CD4-positive, alpha-beta T cell (primary cell): ENCODE measurements at regions of chr12 and their contacts with region 1.

Region 1: DNA sequence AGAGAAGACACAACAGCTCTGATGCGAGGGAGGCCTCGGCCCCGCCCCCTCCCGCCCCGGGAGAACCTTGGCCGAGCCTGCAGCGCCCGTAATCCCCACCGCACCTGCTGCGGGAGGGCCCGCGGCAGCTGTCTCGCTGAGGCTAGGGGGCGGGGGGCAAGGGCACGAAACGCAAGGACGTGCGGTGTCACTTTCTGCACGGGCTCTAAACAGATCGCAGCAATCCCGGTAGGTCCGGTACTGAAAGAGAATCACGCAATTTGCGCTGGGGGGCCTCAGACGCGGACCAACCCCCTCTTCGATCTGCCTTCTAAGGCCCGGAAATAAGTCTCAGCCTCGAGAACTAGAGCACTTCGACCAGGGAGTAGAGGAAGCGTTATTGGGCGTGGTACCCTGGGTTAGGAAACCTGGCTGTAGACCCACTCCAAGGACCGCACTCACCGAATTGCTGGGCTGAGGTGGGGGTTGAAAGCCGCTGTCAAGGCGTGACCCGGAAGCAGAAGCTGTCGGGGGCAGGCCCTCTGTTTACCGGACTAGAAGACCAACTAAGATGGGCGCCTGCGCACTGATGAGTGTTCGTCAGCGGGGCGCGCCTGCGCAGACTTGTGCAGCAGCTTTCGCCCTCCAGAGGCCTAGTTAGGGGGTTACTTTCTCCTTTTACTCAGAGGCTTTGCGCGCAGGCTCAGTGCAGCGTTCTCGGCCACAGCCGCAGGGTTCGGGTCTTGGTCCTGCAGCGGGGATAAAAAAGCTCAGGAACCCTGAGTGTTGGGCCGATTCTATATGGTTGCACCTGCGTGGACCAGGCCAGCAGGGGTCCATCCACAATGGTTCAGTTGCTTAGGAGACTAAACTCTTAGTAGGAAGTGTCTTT is at the start of gene ASB8:
- DNase-seq: peak; percentile 98 to 100 (median 99)
- ATAC-seq: peak; percentile 87
- H3K4me3 ChIP-seq: peak within 1 kb of the TSS; percentile 97
- H3K4me3 Mint-ChIP-seq: peak within 1 kb of the TSS; percentile 97
- H3K27ac ChIP-seq: peak within 1 kb of the TSS; percentile 78 to 89
- H3K27ac Mint-ChIP-seq: peak within 1 kb of the TSS; percentile 99
- H3K4me1 ChIP-seq: peaks cover 25% of the 10 kb centered on the region
- H3K4me1 Mint-ChIP-seq: peaks cover 63% of the 10 kb centered on the region
- H3K27me3 ChIP-seq: no peaks in the 10 kb centered on the region
- H3K27me3 Mint-ChIP-seq: no peaks in the 10 kb centered on the region
- CTCF ChIP-seq: peak; percentile 48
- total RNA-seq, gene ASB8: 50.9 TPM

Region 2: DNA sequence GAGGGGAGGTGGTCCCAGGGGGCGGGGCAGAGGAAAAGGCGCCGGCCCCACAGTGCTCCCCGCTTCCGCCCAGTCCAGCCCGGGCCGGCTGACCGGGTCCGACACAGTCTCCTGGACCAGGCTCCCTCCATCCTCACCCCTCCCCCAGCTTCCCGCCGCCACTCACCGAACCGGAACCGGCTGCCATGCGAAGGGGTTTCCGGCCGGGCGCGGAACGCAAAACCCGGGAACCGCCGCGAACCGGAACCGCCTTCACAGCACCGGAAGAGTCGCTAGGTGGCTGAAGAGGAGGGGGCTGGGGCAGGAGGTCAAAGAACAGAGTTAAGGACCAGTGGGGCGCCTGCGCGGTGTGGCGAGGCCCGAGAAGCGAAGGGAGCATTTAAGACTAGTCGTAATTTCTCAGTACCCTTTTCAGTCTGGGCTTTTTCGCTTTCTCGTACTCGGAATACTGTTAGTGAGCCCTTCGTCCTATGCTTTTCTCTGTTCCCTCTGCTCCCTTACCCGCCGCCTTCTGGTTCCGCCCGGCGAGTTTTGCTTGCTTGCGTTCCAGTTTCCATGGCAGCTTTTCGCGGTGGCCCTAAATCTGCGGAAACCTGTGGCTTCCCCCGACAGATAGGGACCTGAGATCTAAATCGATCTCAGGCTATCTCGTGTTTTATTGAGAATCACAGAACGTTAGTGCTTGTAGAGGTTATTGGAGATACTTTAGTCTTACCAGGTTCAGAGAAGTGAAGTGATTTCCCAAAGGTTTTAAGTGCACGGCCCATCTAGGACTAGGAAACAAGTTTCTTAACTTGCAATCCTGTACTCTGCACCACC is 51.2 kb before region 1 on chr12 and contains the start of gene SENP1:
- CTCF ChIA-PET with region 1: interaction called, 14 read pairs
- POLR2A ChIA-PET with region 1: interaction called, 50 read pairs
- intact Hi-C with region 1: loop called (anchors 1 to 2 kb)
- DNase-seq: peak; percentile 84 to 95 (median 88)
- ATAC-seq: peak; percentile 80
- H3K4me3 ChIP-seq: peak within 1 kb of the TSS; percentile 89
- H3K4me3 Mint-ChIP-seq: peak within 1 kb of the TSS; percentile 94
- H3K27ac ChIP-seq: peak within 1 kb of the TSS; percentile 94 to 96
- H3K27ac Mint-ChIP-seq: peak within 1 kb of the TSS; percentile 89
- H3K4me1 ChIP-seq: peaks cover 33% of the 10 kb centered on the region
- H3K4me1 Mint-ChIP-seq: peaks cover 54% of the 10 kb centered on the region
- H3K27me3 ChIP-seq: no peaks in the 10 kb centered on the region
- H3K27me3 Mint-ChIP-seq: no peaks in the 10 kb centered on the region
- CTCF ChIP-seq: peak; percentile 44
- total RNA-seq, gene SENP1: 20.3 to 25.7 TPM

Region 3: DNA sequence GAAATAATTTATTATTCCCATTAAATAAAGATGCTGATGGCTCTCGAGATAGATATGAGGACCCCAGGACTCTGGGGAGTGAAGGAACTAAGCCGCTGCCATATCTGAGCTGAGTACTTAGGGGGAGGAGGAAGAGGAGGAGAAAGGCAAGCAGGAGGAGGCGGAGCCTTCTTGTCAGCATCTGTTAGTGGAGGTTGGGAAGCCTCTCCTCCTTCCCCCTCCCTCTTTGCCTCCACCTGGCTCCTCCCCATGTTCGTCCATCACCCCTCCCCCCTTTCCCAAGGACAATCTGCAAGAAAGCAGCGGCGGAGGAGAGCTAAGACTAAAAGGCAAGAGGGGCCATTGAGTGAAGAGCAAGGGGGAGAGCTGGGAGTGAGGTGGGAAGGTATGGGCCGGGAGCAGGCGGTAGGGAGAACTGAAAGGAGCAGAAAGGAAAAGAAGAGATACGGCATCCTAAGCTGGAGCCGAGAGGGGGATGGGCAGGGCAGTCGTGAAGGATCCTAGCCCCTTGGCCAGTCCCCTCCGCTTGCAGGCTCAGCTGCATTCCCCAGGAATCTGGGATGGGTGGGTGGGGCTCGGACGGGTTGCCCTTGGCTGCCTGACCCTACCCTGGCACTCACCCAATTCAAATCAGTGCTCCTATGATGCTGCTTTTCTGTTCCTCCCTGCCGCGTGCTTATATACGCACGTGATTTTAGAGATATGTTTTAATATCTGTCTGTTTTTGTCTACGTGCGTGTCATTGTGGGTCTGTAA is 38.0 kb before region 1 on chr12 and contains the start of gene PFKM:
- CTCF ChIA-PET with region 1: interaction called, 3 read pairs
- POLR2A ChIA-PET with region 1: interaction called, 11 read pairs
- intact Hi-C with region 1: no loop called
- DNase-seq: peak; percentile 37 to 88 (median 56)
- ATAC-seq: peak; percentile 98
- H3K4me3 ChIP-seq: peak within 1 kb of the TSS; percentile 74
- H3K4me3 Mint-ChIP-seq: peak within 1 kb of the TSS; percentile 98
- H3K27ac ChIP-seq: no peak within 1 kb of the TSS
- H3K27ac Mint-ChIP-seq: peak within 1 kb of the TSS; percentile 52
- H3K4me1 ChIP-seq: peaks cover 15% of the 10 kb centered on the region
- H3K4me1 Mint-ChIP-seq: peaks cover 29% of the 10 kb centered on the region
- H3K27me3 ChIP-seq: no peaks in the 10 kb centered on the region
- H3K27me3 Mint-ChIP-seq: peaks cover 17% of the 10 kb centered on the region
- CTCF ChIP-seq: no peak
- total RNA-seq, gene PFKM: 9.3 to 9.4 TPM

Region 4: GRCh38 chr12:48183091-48183875 is 26.0 kb after region 1 on chr12 and contains the start of gene CCDC184:
- CTCF ChIA-PET with region 1: interaction called, 10 read pairs
- POLR2A ChIA-PET with region 1: interaction called, 8 read pairs
- intact Hi-C with region 1: no loop called
- DNase-seq: peak; percentile 51 to 93 (median 68)
- ATAC-seq: peak; percentile 76
- H3K4me3 ChIP-seq: peak within 1 kb of the TSS; percentile 76
- H3K4me3 Mint-ChIP-seq: peak within 1 kb of the TSS; percentile 93
- H3K27ac ChIP-seq: no peak within 1 kb of the TSS
- H3K27ac Mint-ChIP-seq: peak within 1 kb of the TSS; percentile 50
- H3K4me1 ChIP-seq: peaks cover 25% of the 10 kb centered on the region
- H3K4me1 Mint-ChIP-seq: no peaks in the 10 kb centered on the region
- H3K27me3 ChIP-seq: peaks cover 14 to 15% of the 10 kb centered on the region in 2 experiments
- H3K27me3 Mint-ChIP-seq: peaks cover 47% of the 10 kb centered on the region
- CTCF ChIP-seq: peak; percentile 51
- total RNA-seq, gene CCDC184: 0.92 to 1.0 TPM

Region 5: DNA sequence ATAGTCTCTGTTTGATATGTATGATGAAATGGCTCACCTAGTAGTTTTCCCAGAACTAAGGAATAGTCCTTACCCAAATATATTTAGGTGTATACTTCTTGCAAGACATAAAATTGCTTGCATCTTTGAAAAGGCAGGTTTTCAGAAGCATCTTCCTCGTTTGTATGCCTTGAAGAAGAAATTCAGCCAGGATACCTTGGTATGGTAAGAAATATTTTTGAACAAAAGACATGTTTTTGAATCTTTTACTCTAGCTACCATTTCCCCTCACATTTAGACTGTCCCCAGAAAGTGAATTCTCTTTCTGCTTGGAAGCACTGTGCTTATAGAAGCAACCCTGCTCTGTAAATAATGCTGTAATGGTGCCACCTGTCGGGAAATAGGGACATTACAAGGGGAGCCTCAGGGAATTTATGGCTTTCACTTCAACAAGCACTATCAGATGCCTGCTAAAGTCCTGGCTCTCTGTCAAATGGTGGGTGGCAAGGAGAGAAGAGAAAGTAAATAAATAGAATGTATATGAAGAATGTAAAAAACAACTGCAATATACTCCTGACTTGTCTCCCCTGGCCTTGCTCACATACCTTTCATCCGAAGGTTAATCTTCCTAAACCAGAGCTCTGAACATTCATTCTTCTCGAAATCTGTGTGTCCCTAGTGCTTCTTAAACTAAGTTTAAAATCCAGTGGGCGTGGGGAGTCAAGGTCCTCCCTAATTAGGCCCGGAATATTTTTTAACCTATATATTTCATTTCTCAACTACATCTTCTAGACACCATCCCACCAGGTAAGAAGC is 32.3 kb after region 1 on chr12:
- CTCF ChIA-PET with region 1: interaction called, 3 read pairs
- POLR2A ChIA-PET with region 1: no interaction called
- intact Hi-C with region 1: loop called in 1 of 2 experiments (anchors 5 kb)
- DNase-seq: peak; percentile 43 to 83 (median 66)
- ATAC-seq: peak; percentile 91
- H3K4me3 ChIP-seq: no peak overlapping the region
- H3K4me3 Mint-ChIP-seq: no peak overlapping the region
- H3K27ac ChIP-seq: no peak overlapping the region
- H3K27ac Mint-ChIP-seq: no peak overlapping the region
- H3K4me1 ChIP-seq: peaks cover 3% of the 10 kb centered on the region
- H3K4me1 Mint-ChIP-seq: no peaks in the 10 kb centered on the region
- H3K27me3 ChIP-seq: peaks cover 8 to 11% of the 10 kb centered on the region in 2 experiments
- H3K27me3 Mint-ChIP-seq: peaks cover 23% of the 10 kb centered on the region
- CTCF ChIP-seq: peak; percentile 80

Region 6: GRCh38 chr12:48681738-48682532 is 524.7 kb after region 1 on chr12 and contains the start of gene KANSL2:
- CTCF ChIA-PET with region 1: no interaction called
- POLR2A ChIA-PET with region 1: no interaction called
- intact Hi-C with region 1: loop called in 1 of 2 experiments (anchors 5 kb)
- DNase-seq: peak; percentile 94 to 99 (median 96)
- ATAC-seq: peak; percentile 94
- H3K4me3 ChIP-seq: peak within 1 kb of the TSS; percentile 90
- H3K4me3 Mint-ChIP-seq: peak within 1 kb of the TSS; percentile 91
- H3K27ac ChIP-seq: peak within 1 kb of the TSS; percentile 84 to 90
- H3K27ac Mint-ChIP-seq: peak within 1 kb of the TSS; percentile 97
- H3K4me1 ChIP-seq: peaks cover 37% of the 10 kb centered on the region
- H3K4me1 Mint-ChIP-seq: peaks cover 52% of the 10 kb centered on the region
- H3K27me3 ChIP-seq: no peaks in the 10 kb centered on the region
- H3K27me3 Mint-ChIP-seq: no peaks in the 10 kb centered on the region
- CTCF ChIP-seq: no peak
- total RNA-seq, gene KANSL2: 142 to 144 TPM